Psoas muscle (tissue), 8 donors: ENCODE measurements at regions of chr15 and their contacts with region 1.

Region 1: DNA sequence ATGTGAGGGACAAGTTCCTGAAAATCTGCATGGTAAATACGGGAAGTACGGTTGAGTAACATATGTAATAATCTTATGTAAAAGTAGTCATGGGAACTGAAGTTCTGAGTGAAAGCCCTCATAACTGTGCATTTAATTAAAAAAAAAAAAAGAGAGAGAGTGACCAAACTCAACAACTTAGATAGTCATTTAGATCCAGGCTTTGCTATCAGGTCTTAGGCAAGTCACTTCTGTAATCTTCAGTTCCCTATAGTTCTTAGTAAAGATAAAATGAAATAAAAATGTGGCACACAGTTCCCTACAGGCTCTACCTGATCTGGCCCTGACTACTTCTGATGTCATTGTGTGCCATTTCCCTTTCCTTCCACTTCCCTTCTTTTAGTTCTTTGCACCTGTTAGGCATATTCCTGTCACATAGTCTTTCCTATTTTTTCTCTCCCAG is 15.0 kb downstream of the RNF111 start:
- DNase-seq: no peak
- ATAC-seq: peak in 1 of 4 donors; percentile 26
- H3K4me3 ChIP-seq: no peak overlapping the region
- H3K27ac ChIP-seq: no peak overlapping the region
- H3K4me1 ChIP-seq: peaks cover 2% of the 10 kb centered on the region
- H3K27me3 ChIP-seq: no peaks in the 10 kb centered on the region
- CTCF ChIP-seq: no peak

Region 2: DNA sequence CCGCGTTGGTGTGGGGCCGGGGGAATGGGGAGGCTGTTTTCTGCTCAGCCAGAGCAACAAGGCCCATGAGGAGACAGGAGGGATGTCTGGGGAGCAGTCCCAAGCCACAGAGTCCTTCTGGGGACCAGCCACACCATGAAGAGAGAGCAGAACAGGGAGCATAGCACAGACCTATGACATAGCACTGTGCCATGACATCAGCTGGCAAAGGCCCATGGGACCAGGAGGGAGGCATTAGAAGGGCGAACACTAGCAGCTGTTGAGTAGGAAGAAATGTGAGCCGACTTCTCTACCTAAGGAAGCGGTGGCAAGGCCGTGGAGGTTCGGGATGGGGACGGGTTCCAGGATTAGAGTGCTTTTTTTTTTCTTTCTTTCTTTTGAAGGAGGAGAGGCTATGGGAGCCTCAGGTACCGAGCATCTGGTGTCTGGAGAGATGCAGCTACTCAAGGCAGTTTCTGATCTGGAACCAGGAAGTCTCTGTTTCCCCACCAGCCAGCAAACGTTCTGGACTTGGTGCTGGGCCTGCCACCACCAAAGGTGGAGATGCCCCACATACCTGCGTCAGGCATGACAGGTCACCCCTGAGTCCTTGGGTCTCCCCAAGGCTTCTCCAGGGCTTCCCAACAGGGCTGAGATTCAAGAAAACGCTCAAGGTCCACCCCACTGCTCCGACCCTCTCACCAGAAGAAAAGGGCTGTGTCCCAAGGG is 1703.4 kb before region 1 on chr15:
- intact Hi-C with region 1: loop called in 1 of 2 experiments (anchors 10 kb)
- DNase-seq: no peak
- ATAC-seq: peak; percentile 47 to 73 (median 63)
- H3K4me3 ChIP-seq: no peak overlapping the region
- H3K27ac ChIP-seq: no peak overlapping the region
- H3K4me1 ChIP-seq: no peaks in the 10 kb centered on the region
- H3K27me3 ChIP-seq: no peaks in the 10 kb centered on the region
- CTCF ChIP-seq: no peak

Region 3: GRCh38 chr15:58933281-58934113 is 68.9 kb before region 1 on chr15 and contains the start of gene SLTM:
- intact Hi-C with region 1: no loop called
- DNase-seq: peak; percentile 94 to 97
- ATAC-seq: peak; percentile 94 to 97 (median 96)
- H3K4me3 ChIP-seq: peak within 1 kb of the TSS; percentile 93
- H3K27ac ChIP-seq: peak within 1 kb of the TSS; percentile 99
- H3K4me1 ChIP-seq: peaks cover 23% of the 10 kb centered on the region
- H3K27me3 ChIP-seq: no peaks in the 10 kb centered on the region
- CTCF ChIP-seq: peak; percentile 20
- total RNA-seq, gene SLTM: 32.6 to 63.6 (median 40.5) TPM

Region 4: GRCh38 chr15:59042041-59042440 is 39.6 kb after region 1 on chr15:
- intact Hi-C with region 1: loop called in 1 of 2 experiments (anchors 5 kb)
- DNase-seq: no peak
- ATAC-seq: no peak
- H3K4me3 ChIP-seq: no peak overlapping the region
- H3K27ac ChIP-seq: no peak overlapping the region
- H3K4me1 ChIP-seq: peaks cover 12% of the 10 kb centered on the region
- H3K27me3 ChIP-seq: no peaks in the 10 kb centered on the region
- CTCF ChIP-seq: no peak